GM23248 (cell line): ENCODE measurements at regions of chr2 and their contacts with region 1.

Region 1: DNA sequence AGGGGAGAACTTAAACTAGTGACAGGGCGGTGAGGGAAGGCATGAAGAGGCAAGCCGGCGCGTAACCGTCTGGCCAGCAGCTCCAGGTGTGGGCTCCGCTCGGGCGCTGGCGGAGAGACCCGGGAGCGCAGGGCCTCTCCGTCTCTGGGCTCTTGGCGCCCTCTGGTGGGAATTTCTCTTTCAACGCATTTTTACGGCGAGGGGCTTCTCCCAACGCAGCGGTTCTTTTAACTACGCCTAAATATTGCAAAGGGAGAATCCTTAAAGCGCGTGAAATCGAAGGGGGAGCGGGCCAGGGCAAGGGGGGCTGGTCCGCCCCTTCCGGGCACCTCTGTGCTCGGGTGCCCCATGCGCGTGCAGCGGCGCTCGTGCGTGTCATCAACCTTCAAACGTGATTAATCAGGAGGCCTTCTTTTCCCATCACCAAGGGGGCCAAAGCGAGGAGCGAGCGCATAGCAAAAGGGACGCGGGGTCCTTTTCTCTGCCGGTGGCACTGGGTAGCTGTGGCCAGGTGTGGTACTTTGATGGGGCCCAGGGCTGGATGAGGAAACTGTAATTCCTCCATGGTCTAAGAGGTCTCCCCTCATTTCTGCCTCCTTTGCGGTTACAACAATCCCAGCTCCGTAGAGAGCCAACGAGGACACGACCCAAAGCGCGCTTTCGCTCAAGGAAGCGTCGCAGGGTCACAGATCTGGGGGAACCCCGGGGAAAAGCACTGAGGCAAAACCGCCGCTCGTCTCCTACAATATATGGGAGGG is 762 bp upstream of the GAD1 start:
- DNase-seq: peak; percentile 67
- H3K4me3 ChIP-seq: peak overlapping the region; percentile 75
- H3K27ac ChIP-seq: no peak overlapping the region
- H3K4me1 ChIP-seq: 0 out of 2 replicates have a peak, but pooled peaks cover 6% of the 10 kb centered on the region
- H3K27me3 ChIP-seq: peaks cover 59% of the 10 kb centered on the region

Region 2: DNA sequence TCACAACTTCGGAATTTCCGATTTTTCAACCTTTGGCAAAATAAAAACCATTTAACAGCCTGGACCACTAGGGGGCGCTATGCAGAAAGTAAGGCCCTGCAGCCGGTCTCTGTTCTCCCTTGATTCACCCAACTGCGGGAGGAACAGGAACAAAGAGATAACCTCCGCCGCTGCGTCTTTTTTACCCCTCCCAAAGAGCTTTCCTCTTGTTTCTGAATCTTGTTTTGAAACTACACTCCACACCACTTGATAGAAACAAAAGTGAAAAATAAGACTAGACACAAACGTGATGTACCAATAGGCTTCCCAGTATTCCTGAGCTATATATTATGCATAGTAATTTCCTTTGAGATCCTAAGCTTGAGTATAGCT is 406.8 kb before region 1 on chr2:
- in situ Hi-C with region 1: loop called (anchors 25 kb)
- DNase-seq: peak; percentile 82
- H3K4me3 ChIP-seq: peak overlapping the region; percentile 41; the same call in 1 of the 2 replicates
- H3K27ac ChIP-seq: no peak overlapping the region
- H3K4me1 ChIP-seq: no peaks in the 10 kb centered on the region
- H3K27me3 ChIP-seq: peaks cover 14% of the 10 kb centered on the region

Region 3: GRCh38 chr2:170723446-170723958 is 92.4 kb before region 1 on chr2:
- in situ Hi-C with region 1: no loop called
- DNase-seq: no peak
- H3K4me3 ChIP-seq: no peak overlapping the region
- H3K27ac ChIP-seq: no peak overlapping the region
- H3K4me1 ChIP-seq: no peaks in the 10 kb centered on the region
- H3K27me3 ChIP-seq: peaks cover 27% of the 10 kb centered on the region

Region 4: GRCh38 chr2:171598713-171599319 is 782.9 kb after region 1 on chr2:
- in situ Hi-C with region 1: no loop called
- DNase-seq: peak; percentile 86
- H3K4me3 ChIP-seq: no peak overlapping the region
- H3K27ac ChIP-seq: no peak overlapping the region
- H3K4me1 ChIP-seq: peaks cover 11% of the 10 kb centered on the region
- H3K27me3 ChIP-seq: no peaks in the 10 kb centered on the region